CD4-positive, alpha-beta T cell (primary cell): ENCODE measurements at regions of chr1 and their contacts with region 1.

Region 1: DNA sequence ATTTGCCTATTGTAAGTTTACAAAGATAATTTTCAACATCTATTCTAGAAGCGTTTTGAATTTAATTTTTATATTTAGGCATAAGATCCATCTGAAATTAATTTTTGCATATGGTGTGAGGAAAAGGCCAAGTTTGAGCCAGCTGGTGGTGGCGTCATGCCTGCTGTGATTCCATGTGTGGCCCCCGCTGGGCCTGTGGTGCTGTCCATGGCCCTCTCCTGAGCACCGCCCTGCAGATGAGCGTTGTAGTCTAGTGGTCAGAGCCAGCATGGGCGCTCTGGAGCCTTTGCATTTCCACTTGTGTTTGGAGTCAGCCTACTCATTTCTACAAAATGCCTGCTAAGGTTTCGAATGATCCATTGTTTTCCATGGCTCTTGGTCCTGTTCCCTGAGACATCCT is 22.7 kb downstream of the PRSS38 start:
- DNase-seq: no peak
- ATAC-seq: no peak
- H3K4me3 ChIP-seq: no peak overlapping the region
- H3K4me3 Mint-ChIP-seq: no peak overlapping the region
- H3K27ac ChIP-seq: no peak overlapping the region
- H3K27ac Mint-ChIP-seq: no peak overlapping the region
- H3K4me1 ChIP-seq: no peaks in the 10 kb centered on the region
- H3K4me1 Mint-ChIP-seq: no peaks in the 10 kb centered on the region
- H3K27me3 ChIP-seq: no peaks in the 10 kb centered on the region
- H3K27me3 Mint-ChIP-seq: peaks cover 6% of the 10 kb centered on the region
- CTCF ChIP-seq: no peak

Region 2: GRCh38 chr1:227799756-227800155 is 38.4 kb before region 1 on chr1:
- CTCF ChIA-PET with region 1: no interaction called
- POLR2A ChIA-PET with region 1: no interaction called
- intact Hi-C with region 1: loop called in 1 of 2 experiments (anchors 5 kb)
- DNase-seq: no peak
- ATAC-seq: no peak
- H3K4me3 ChIP-seq: no peak overlapping the region
- H3K4me3 Mint-ChIP-seq: no peak overlapping the region
- H3K27ac ChIP-seq: no peak overlapping the region
- H3K27ac Mint-ChIP-seq: no peak overlapping the region
- H3K4me1 ChIP-seq: no peaks in the 10 kb centered on the region
- H3K4me1 Mint-ChIP-seq: no peaks in the 10 kb centered on the region
- H3K27me3 ChIP-seq: peaks cover 0 to 5% of the 10 kb centered on the region in 2 experiments
- H3K27me3 Mint-ChIP-seq: peaks cover 12% of the 10 kb centered on the region
- CTCF ChIP-seq: no peak

Region 3: GRCh38 chr1:228544021-228544850 is 706.1 kb after region 1 on chr1:
- CTCF ChIA-PET with region 1: no interaction called
- POLR2A ChIA-PET with region 1: no interaction called
- intact Hi-C with region 1: no loop called
- DNase-seq: no peak
- ATAC-seq: no peak
- H3K4me3 ChIP-seq: no peak overlapping the region
- H3K4me3 Mint-ChIP-seq: no peak overlapping the region
- H3K27ac ChIP-seq: no peak overlapping the region
- H3K27ac Mint-ChIP-seq: no peak overlapping the region
- H3K4me1 ChIP-seq: no peaks in the 10 kb centered on the region
- H3K4me1 Mint-ChIP-seq: no peaks in the 10 kb centered on the region
- H3K27me3 ChIP-seq: peaks cover 12 to 14% of the 10 kb centered on the region in 2 experiments
- H3K27me3 Mint-ChIP-seq: peaks cover 40% of the 10 kb centered on the region
- CTCF ChIP-seq: no peak